ENCODE measurements at regions of chr20 and their contacts with region 1.

Region 1: DNA sequence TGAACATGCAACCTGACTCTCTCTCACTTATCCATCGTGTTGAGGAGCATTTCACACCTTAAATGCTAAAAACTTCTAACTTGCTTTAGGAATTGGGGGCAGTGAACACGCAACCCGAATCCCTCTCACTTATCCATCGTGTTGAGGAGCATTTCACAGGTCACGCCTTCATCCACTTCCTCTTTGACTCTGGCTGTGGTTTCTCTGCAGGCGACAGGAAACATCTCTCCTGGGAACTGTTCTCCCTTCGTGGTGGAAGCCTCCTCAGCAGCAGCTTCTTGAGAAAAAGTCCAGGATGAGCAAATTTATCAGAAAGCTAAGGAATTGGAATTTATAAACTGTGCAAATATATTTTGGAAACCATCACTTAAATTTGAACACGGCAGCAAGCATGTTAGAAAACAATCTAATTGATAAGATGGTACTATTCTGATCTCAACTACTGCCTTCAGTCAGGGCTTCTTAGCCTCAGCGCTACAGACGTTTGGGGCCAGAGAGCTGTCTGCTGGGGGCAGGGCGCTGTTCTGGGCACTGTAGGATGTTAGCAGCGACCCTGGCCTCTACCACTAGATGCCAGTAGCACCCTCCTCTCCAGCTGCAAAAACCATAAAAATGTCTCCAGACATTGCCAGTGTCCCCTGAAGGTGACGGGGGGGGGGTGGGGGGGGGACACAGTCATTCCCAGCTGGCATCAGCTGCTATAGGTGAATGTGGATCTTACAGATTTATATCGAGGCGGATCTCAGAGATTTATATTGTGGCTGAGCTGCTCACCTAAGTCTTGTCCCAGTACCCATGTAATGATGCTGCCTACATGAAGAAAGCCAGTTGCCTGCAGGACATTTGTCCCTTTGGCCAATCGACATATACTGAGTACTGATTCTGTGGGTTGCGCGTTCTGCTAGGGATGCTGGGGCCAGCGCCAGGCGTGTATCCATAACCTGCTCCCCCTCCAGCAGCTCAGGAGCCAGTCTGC is 26.2 kb downstream of the CTCFL start:
- DNase-seq: peak in 1 of 3 donors; percentile 57
- ATAC-seq: peak; percentile 76
- H3K4me3 ChIP-seq: no peak overlapping the region
- H3K4me1 ChIP-seq: peaks cover 9% of the 10 kb centered on the region
- CTCF ChIP-seq: no peak

Region 2: GRCh38 chr20:57380081-57380881 is 118.4 kb before region 1 on chr20:
- intact Hi-C with region 1: loop called (anchors 2 to 5 kb)
- DNase-seq: peak in 1 of 3 donors; percentile 21
- ATAC-seq: no peak
- H3K4me3 ChIP-seq: no peak overlapping the region
- H3K4me1 ChIP-seq: peaks cover 27% of the 10 kb centered on the region
- CTCF ChIP-seq: no peak

Region 3: DNA sequence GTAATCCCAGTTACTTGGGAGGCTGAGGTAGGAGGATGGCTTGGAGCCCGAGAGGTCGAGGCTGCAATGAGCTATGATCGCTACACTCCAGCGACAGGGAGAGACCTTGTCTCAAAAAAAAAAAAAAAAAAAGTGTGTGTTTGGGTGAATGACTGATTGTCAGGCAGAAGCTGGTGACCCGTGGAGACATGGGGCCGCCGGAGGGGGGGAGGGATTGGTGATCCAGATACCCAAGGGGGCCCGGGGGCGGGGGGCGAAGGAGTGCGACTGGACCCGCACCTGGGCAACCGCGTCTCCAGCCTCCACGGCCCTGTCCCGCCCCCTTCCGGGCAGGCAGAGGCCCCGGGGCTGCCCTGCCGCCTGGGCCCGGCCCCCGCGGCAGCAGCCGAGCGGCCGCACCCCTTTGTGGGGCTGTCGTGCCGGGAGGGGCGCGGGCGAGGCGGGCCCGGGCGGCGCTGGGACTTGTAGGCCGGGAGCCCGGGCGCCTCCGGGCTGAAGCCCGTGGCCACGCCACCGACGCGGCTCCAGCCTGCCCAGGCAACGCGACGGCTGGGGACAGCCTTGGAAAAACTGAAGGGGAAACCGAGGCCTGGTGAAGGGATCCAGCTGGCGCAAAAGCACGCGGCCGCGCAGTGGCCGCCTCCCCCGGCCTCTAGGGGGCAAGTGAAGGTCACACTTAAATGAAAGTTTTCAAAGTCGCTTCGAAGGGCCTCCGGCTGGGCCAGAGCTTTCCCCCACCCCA is 109.6 kb before region 1 on chr20:
- intact Hi-C with region 1: loop called in 1 of 2 experiments (anchors 5 kb)
- DNase-seq: peak; percentile 87 to 91 (median 91)
- ATAC-seq: peak; percentile 74
- H3K4me3 ChIP-seq: no peak overlapping the region
- H3K4me1 ChIP-seq: peaks cover 40% of the 10 kb centered on the region
- CTCF ChIP-seq: no peak

Region 4: DNA sequence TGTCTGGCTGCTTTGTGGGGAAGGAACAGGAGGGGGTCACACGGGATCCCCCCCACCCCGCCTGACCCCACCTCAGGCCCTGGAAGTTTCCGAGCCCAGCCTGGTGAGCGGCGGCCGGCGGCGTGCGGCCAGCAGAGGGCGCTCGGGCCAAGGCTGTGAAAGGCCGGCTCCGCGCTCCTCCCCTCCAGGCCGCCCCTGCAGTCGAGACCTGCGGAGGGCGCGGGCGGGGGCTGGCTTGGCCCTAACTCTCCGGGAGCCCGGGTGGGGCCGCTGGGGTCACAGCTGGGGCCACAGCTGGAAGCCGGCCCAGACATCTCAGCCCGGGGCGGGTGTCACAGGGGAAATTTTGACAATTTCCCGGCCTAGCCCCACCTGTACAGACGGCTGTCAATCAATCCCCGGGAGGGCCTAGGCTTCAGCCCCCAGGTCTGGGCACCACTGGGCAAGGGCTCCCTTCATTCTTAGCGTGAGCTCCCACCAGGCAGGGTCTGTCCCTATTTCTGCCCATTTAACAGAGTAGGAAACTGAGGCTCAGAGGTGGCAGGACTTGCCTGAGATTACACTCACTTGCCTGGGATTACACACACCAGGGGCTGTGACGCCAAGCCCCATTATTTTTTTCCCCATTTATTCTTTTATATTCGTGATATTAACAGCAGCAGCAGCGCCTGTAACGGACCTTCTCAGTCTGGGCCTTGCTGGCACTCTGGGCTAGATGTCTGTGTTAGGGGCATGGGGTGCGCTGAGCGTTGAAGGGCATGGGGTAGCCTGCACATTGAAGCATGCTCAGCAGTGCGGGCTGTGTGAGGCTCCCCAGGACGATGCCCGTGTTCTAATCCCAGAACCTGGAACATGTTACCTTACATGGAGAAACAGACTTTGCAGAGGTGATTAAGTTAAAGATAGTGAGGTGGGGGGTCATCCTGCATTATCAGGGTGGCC is 98.6 kb after region 1 on chr20:
- intact Hi-C with region 1: no loop called
- DNase-seq: peak; percentile 77 to 88 (median 85)
- ATAC-seq: peak; percentile 76
- H3K4me3 ChIP-seq: no peak overlapping the region
- H3K4me1 ChIP-seq: peaks cover 19% of the 10 kb centered on the region
- CTCF ChIP-seq: peak; percentile 91

Measured in mucosa of descending colon (tissue), 3 donors.